BJ (cell line): ENCODE measurements at regions of chrX and their contacts with region 1.

Region 1: GRCh38 chrX:138925330-138925729 is 213.8 kb upstream of the FGF13 start:
- DNase-seq: peak; percentile 49
- H3K4me3 ChIP-seq: no peak overlapping the region
- H3K27me3 ChIP-seq: no peaks in the 10 kb centered on the region
- CTCF ChIP-seq: no peak

Region 2: GRCh38 chrX:138765051-138765450 is 160.3 kb before region 1 on chrX:
- CTCF ChIA-PET with region 1: no interaction called
- POLR2A ChIA-PET with region 1: no interaction called
- DNase-seq: no peak
- H3K4me3 ChIP-seq: no peak overlapping the region
- H3K27me3 ChIP-seq: no peaks in the 10 kb centered on the region
- CTCF ChIP-seq: no peak

Region 3: DNA sequence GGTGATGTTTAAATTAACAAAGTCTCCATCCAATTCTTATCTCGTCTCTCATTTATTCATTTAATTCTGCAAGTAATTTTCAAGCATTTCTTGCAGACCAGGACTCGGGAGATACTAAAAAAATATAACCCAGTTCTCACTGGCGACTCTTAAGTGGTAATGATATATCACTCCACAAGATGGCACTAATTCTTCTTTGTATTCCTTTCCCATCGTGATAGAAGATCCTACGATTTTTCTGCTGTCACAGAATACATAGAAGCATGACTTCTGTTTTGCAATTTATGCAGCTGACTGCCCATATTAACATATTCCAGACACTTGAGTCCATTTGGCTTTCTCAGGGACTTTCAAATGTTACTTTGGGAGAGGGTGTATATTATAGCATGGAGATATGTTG is 149.8 kb before region 1 on chrX:
- CTCF ChIA-PET with region 1: no interaction called
- POLR2A ChIA-PET with region 1: no interaction called
- DNase-seq: no peak
- H3K4me3 ChIP-seq: no peak overlapping the region
- H3K27me3 ChIP-seq: no peaks in the 10 kb centered on the region
- CTCF ChIP-seq: peak; percentile 19; the same call in 1 of the 2 replicates

Region 4: DNA sequence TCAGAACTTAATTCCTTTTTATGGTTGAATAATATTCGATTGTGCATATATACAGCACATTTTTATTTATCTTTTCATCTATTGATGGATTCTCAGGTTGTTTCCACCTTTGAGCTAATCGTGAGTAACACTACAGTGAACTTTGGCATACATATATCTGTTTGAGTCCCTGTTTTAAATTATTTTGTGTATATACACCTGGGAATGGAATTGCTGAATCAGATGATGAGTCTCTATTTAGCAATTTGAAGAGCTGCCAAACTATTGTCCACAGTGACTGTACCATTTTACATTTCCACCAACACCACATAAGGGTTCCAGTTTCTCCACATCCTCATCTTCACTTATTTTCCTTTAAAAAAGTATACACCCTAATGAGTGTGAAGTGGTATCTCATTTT is 47.6 kb before region 1 on chrX:
- CTCF ChIA-PET with region 1: no interaction called
- POLR2A ChIA-PET with region 1: no interaction called
- DNase-seq: no peak
- H3K4me3 ChIP-seq: no peak overlapping the region
- H3K27me3 ChIP-seq: no peaks in the 10 kb centered on the region
- CTCF ChIP-seq: no peak

Region 5: GRCh38 chrX:138939038-138939437 is 13.7 kb after region 1 on chrX:
- CTCF ChIA-PET with region 1: no interaction called
- POLR2A ChIA-PET with region 1: interaction called, 10 read pairs
- DNase-seq: no peak
- H3K4me3 ChIP-seq: no peak overlapping the region
- H3K27me3 ChIP-seq: no peaks in the 10 kb centered on the region
- CTCF ChIP-seq: no peak